MCF 10A (cell line): ENCODE measurements at regions of chr1 and their contacts with region 1.

Region 1: DNA sequence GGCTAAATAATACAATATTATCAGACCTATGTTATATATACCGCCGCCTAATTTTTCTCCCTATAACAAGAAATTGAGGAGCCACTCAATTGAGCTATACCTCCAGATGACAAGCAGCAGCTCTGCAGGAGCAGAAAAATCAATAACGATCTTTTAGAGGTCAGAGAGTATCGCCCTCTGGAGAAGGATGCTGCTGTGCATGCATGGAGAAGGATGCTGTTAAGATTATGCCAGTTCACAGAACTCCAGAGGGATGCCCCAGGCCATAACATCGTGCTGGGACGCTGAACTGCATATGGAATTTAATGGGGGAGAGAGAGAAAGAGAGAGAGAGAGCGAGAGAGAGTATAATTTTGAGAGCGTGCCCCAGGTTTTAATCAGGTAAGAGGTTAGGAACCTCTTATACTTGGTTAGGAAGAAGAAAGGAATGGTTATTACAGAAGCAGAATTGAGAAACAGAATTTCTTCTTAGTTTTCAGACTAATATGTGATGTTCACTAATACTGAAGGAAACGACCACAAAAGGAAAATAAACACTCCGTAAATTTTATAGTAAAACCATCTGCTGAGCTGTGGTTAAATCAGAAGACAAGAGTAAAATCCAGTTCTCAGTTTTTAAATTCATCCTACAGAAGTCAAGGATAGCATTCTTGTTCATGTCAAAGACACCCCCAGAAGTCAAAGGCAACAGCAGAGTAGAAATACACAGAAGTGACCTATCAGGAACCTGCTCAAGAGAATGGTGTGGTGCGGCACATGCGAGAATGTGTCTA is 111.1 kb downstream of the SMYD2 start:
- DNase-seq: no peak
- H3K4me3 Mint-ChIP-seq: no peak overlapping the region
- H3K27ac Mint-ChIP-seq: no peak overlapping the region
- H3K4me1 Mint-ChIP-seq: peaks cover 16% of the 10 kb centered on the region
- H3K27me3 Mint-ChIP-seq: no peaks in the 10 kb centered on the region
- CTCF ChIP-seq: no peak

Region 2: DNA sequence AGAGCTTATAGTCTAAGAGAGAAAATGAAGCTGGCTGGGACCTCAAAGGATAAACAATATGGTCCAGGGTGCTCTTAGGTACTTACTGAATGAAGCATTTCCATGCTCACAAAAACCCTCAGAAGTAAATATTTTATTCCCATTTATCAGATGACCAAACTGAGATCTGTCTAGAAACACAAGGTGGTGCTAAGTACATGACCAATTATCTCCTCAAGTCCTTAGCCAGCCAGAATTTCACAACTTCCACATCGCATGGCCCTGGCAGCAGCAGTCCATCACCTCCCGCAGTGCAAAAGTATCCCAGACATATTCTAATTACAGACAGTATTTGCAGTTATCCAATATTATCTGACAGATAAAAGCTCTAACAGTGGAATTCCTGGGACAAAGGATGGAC is 725.9 kb before region 1 on chr1:
- CTCF ChIA-PET with region 1: no interaction called
- POLR2A ChIA-PET with region 1: no interaction called
- intact Hi-C with region 1: no loop called
- DNase-seq: no peak
- H3K4me3 Mint-ChIP-seq: no peak overlapping the region
- H3K27ac Mint-ChIP-seq: no peak overlapping the region
- H3K4me1 Mint-ChIP-seq: no peaks in the 10 kb centered on the region
- H3K27me3 Mint-ChIP-seq: peaks cover 20% of the 10 kb centered on the region
- CTCF ChIP-seq: no peak

Region 3: GRCh38 chr1:214174508-214175199 is 217.4 kb before region 1 on chr1:
- CTCF ChIA-PET with region 1: no interaction called
- POLR2A ChIA-PET with region 1: no interaction called
- intact Hi-C with region 1: no loop called
- DNase-seq: no peak
- H3K4me3 Mint-ChIP-seq: no peak overlapping the region
- H3K27ac Mint-ChIP-seq: no peak overlapping the region
- H3K4me1 Mint-ChIP-seq: no peaks in the 10 kb centered on the region
- H3K27me3 Mint-ChIP-seq: peaks cover 88% of the 10 kb centered on the region
- CTCF ChIP-seq: no peak

Region 4: GRCh38 chr1:214377886-214378285 is 14.2 kb before region 1 on chr1:
- CTCF ChIA-PET with region 1: interaction called, 10 read pairs
- POLR2A ChIA-PET with region 1: interaction called, 17 read pairs
- intact Hi-C with region 1: no loop called
- DNase-seq: no peak
- H3K4me3 Mint-ChIP-seq: no peak overlapping the region
- H3K27ac Mint-ChIP-seq: peak overlapping the region; percentile 47
- H3K4me1 Mint-ChIP-seq: peaks cover 11% of the 10 kb centered on the region
- H3K27me3 Mint-ChIP-seq: no peaks in the 10 kb centered on the region
- CTCF ChIP-seq: no peak